ENCODE measurements at regions of chr13 and their contacts with region 1.

Region 1: DNA sequence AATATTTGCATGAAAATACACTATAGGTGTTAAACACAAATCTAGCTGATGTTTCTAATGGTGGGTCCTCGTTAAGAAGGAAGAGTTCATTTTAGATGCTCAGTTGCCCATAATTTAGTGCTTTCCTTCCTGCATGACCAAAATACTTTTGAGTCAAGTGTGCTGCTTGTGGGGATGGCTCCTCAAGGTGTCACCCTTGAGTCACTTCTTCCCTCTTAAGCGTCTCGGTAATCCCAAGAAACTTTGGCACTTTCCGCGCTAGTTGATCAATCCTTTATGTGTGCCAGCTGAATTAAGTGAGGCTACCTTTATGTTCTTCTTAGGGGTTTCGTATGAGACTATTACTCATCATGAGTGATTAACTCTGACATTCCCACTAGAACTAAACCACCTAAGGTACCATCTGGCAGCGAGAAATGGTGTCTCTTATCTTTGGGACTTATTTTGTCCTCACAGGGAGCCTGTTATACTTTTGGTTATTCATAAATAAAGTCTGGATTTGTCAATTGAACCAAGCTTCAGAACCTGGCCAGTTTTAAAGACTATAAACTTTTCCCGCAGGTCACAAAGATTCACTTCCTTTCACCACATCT is 106.8 kb downstream of the NHLRC3 start:
- DNase-seq: peak; percentile 24
- ATAC-seq: no peak
- H3K4me3 ChIP-seq: no peak overlapping the region
- H3K27ac ChIP-seq: no peak overlapping the region
- H3K4me1 ChIP-seq: no peaks in the 10 kb centered on the region; the same call in 1 of the 2 replicates
- H3K27me3 ChIP-seq: no peaks in the 10 kb centered on the region; the same call in none of the 2 replicates
- CTCF ChIP-seq: peak; percentile 74

Region 2: DNA sequence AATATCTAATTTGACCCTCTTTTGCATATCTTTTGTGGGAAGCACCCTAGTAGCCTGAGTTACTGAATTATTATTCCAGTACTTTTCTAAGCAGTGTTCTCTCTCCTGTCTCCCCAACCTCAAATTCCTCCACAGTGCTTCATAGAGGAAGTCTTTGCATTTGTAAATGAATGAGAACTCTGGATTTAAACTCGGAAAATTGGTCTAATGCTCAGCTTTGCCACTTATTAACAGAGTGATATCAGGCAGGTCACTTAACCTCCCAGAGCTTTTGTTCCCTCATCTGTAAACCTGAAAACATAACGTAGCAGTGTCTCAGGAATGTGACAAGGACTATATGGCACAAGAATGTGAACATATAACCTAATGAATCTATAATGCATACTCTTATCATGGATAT is 432.0 kb before region 1 on chr13:
- CTCF ChIA-PET with region 1: no interaction called
- POLR2A ChIA-PET with region 1: no interaction called
- in situ Hi-C with region 1: no loop called
- intact Hi-C with region 1: no loop called
- DNase-seq: no peak
- ATAC-seq: no peak
- H3K4me3 ChIP-seq: no peak overlapping the region
- H3K27ac ChIP-seq: no peak overlapping the region
- H3K4me1 ChIP-seq: no peaks in the 10 kb centered on the region
- H3K27me3 ChIP-seq: no peaks in the 10 kb centered on the region
- CTCF ChIP-seq: no peak

Region 3: GRCh38 chr13:39263033-39263432 is 118.0 kb after region 1 on chr13:
- CTCF ChIA-PET with region 1: interaction called, 3 read pairs
- POLR2A ChIA-PET with region 1: no interaction called
- in situ Hi-C with region 1: no loop called
- intact Hi-C with region 1: loop called (anchors 1 kb)
- DNase-seq: no peak
- ATAC-seq: peak; percentile 71; the same call in 1 of the 2 replicates
- H3K4me3 ChIP-seq: no peak overlapping the region
- H3K27ac ChIP-seq: no peak overlapping the region
- H3K4me1 ChIP-seq: no peaks in the 10 kb centered on the region
- H3K27me3 ChIP-seq: no peaks in the 10 kb centered on the region
- CTCF ChIP-seq: peak; percentile 69

Region 4: DNA sequence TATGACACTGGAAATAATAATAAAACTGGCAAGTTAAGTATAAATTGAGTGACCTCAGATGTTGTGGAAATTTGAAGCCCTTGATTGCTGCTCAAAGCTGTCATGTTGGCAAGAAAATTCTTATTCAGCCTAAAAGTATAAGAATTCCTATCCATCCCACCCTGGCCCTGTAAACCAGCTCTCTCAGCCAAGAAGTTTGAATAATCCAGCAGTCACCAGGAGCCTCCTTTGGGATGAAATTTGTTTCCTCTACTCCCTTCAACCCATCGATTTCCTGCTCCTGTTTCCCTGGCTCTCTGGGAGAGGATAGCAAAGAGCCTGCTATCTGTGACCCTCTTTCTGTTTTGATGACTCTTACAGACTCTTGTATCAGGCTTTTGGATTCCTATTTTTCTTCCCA is 288.6 kb after region 1 on chr13:
- CTCF ChIA-PET with region 1: no interaction called
- POLR2A ChIA-PET with region 1: no interaction called
- in situ Hi-C with region 1: no loop called
- intact Hi-C with region 1: no loop called
- DNase-seq: no peak
- ATAC-seq: no peak
- H3K4me3 ChIP-seq: no peak overlapping the region
- H3K27ac ChIP-seq: no peak overlapping the region
- H3K4me1 ChIP-seq: no peaks in the 10 kb centered on the region
- H3K27me3 ChIP-seq: no peaks in the 10 kb centered on the region
- CTCF ChIP-seq: no peak

Region 5: DNA sequence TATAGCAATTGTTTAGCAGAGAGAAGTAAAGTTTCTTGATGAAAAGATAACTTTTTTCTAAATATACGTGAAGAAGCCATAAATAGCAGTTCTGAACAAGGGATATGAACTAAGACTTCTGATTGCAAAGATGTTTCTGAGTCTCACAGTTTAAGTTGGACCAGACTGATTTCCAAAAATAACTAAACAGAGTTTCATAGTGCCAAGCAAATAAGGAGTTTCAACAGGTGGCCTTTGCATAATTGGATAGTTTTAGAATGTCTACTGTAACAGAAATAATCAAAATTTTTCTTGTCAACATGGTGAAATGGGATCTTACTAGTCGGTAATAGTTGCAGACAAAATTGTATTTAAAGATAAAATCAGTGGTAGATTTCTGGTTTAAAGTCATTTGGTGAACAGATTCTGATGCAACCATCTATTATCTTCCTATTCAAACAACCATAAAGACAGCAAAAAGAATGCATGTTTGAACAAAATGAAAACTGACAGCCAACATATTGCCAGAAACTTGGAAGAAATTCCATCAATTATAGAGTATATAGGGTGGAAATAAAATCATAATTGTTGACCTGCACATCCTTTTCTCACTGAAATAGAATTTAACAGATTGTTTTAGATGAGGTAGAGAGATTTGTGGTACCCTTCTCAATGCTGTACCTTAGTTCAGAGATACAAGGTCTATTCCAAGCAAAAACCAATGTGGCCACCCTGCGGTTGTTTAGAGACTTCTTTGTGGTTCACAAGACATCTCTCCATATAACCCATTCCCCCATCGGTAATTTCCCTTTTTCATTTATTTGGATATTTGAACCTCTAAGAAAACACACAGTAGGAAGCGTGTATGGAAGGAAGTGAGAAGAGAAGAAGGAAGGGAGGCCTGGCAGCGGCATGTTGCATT is 785.8 kb after region 1 on chr13:
- CTCF ChIA-PET with region 1: no interaction called
- POLR2A ChIA-PET with region 1: no interaction called
- in situ Hi-C with region 1: no loop called
- intact Hi-C with region 1: no loop called
- DNase-seq: no peak
- ATAC-seq: no peak
- H3K4me3 ChIP-seq: no peak overlapping the region
- H3K27ac ChIP-seq: no peak overlapping the region
- H3K4me1 ChIP-seq: no peaks in the 10 kb centered on the region
- H3K27me3 ChIP-seq: no peaks in the 10 kb centered on the region
- CTCF ChIP-seq: no peak

Measured in Panc1 (cell line).